Left cardiac atrium (tissue), 4 donors: ENCODE measurements at regions of chr7 and their contacts with region 1.

Region 1: GRCh38 chr7:114085592-114086501 is 167.0 kb upstream of the PPP1R3A start:
- DNase-seq: peak; percentile 81
- ATAC-seq: peak; percentile 79 to 89

Region 2: DNA sequence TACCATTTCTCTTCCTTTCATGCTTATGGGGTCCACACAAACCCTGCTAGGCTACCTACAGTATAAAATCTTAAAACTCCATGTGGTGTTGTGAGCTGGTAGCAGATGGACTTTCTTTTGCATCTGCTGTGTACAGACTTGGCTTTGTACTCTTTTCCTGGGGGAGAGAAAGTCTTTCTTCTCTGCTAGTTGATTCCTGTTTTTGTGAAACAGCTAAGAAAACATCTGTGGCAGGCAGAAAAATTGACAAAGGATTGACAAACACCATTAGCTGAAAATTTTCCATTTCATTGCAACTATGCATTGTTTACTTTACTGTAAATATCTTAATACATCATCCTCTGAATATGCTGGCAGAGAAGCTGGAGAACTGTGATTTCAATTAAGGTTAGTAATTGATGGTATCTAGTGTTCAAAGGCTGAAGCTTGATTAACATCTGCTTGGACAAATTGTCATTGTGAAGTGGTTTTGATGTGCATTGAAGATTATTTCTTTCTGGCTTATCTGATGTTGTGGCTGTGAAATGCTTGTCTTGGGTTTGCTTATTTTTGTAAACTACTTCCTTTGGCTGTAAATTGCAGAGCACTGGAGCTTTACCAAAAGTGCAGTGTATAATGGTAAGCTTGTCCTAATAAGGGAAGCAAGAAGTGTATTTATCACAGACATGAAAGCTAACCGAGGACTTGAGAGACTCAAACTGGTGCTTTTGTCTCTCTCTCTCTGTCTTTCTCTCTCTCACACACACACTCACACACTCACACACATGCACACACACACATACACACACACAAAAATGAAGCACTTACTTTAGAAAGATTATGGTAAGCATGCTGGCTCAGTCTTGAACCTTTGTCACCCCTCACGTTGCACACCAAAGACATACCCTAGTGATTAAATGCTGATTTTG is 328.6 kb after region 1 on chr7 and contains the start of gene FOXP2:
- intact Hi-C with region 1: loop called in 1 of 2 experiments (anchors 10 kb)
- DNase-seq: no peak
- ATAC-seq: peak in 1 of 2 donors; percentile 48
- total RNA-seq, gene FOXP2: 2.4 to 5.5 TPM

Region 3: DNA sequence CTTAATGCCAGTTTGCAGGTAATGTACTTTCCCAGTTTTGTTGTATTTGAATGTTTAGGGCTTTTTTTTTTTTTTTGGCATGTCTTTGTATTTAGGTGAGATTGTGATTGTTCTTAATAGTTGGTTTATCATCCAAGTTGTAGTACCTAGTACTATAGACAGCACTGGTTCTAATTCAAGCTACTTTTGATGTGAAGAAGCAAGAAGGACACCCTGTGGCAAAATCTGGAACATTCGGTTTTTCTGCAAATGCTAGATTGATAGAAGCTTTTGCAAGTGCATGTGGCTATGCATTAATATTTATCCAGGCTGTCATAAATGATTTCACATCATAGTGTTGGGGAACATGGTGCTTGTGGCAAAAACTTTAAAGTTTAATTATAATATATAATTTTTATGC is 577.7 kb after region 1 on chr7:
- intact Hi-C with region 1: loop called in 1 of 2 experiments (anchors 10 kb)
- DNase-seq: no peak
- ATAC-seq: no peak